Body of pancreas (tissue), 4 donors: ENCODE measurements at regions of chr20 and their contacts with region 1.

Region 1: GRCh38 chr20:9359561-9360308 is 154.7 kb upstream of the LAMP5 start:
- DNase-seq: peak; percentile 34 to 63 (median 44)
- ATAC-seq: peak; percentile 66
- H3K4me3 ChIP-seq: no peak overlapping the region
- H3K27ac ChIP-seq: no peak overlapping the region
- H3K4me1 ChIP-seq: no peaks in the 10 kb centered on the region
- H3K27me3 ChIP-seq: no peaks in the 10 kb centered on the region
- CTCF ChIP-seq: peak; percentile 11 to 66 (median 60)
- POLR2A ChIP-seq: no peak

Region 2: DNA sequence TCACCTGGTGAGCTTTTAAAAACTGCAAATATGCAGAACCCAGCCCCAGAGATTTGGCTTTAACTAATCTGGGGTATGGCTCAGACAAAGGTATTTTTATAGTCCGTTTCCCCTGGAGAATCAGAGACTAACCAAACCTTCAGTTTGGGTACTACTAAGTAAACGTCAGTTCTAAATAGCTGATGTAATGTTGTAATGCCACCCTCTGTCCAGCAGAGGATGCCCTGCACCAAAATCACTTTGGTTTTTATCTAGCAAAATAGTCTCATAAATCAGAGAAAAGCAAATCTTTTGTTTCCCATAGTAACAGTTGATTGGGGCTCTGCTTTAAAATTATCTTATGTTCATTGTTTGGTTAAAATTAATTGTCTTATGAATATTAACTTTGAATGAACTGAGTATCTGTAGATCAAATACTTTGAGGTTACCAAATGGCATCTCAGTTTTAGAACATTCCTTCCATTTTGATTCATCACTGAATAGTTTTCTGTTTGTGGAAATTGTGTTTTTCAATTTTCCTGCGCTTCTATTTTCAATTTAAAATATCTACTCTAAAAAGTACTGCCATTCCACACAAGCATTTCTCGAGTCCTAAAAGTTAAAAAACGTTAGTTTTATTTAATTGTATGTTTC is 569.2 kb before region 1 on chr20:
- intact Hi-C with region 1: loop called (anchors 10 kb)
- DNase-seq: peak; percentile 50 to 67 (median 54)
- ATAC-seq: peak; percentile 71
- H3K4me3 ChIP-seq: no peak overlapping the region
- H3K27ac ChIP-seq: no peak overlapping the region
- H3K4me1 ChIP-seq: no peaks in the 10 kb centered on the region
- H3K27me3 ChIP-seq: no peaks in the 10 kb centered on the region
- CTCF ChIP-seq: peak; percentile 81 to 94 (median 91)
- POLR2A ChIP-seq: no peak